GM12878 (cell line): ENCODE measurements at regions of chr2 and their contacts with region 1.

Region 1: GRCh38 chr2:69741619-69742466 is at the start of gene ANXA4:
- DNase-seq: no peak
- ATAC-seq: peak; percentile 91
- H3K4me3 ChIP-seq: peak within 1 kb of the TSS; percentile 71
- H3K27ac ChIP-seq: peak within 1 kb of the TSS; percentile 95
- H3K4me1 ChIP-seq: peaks cover 6% of the 10 kb centered on the region
- H3K27me3 ChIP-seq: no peaks in the 10 kb centered on the region
- CTCF ChIP-seq: no peak
- EP300 ChIP-seq: peak in 1 of 2 experiments; percentile 34; a peak in 1 of 4 replicates
- POLR2A ChIP-seq: peak; percentile 89
- RAD21 ChIP-seq: no peak
- polyA plus RNA-seq, gene ANXA4: 64.6 to 73.1 TPM

Region 2: DNA sequence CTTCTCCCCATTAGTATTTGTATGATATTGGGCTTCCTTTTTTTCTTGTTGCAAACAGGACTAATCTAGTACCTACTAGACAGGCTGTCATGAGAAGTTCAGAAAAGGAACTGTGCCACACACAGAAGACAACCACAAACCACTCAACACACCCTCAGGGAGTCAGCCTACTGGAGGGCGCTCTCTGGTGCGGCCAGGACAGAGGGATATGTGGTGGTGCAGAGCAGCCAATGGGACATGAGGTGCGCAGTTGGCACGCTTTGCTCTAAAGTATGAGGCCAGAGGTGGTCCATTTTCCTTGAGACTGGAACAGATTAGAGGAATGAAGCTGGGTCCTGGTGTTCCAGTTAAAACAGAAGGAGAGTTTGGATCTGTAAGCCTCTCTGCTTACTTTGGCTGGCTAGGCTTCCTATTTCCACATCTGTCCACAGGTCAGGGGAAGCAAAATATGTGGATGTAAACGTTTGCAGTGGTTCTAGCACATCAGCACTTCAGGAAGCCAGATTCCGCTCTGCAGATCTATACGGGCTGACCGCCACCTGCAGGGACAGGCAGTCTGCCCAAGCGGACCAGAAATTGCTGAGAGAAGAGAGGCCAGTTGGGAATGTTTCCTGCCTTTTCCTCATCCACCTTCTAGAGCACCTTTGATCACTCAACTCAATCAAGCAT is 468.9 kb before region 1 on chr2:
- CTCF ChIA-PET with region 1: no interaction called
- POLR2A ChIA-PET with region 1: no interaction called
- RAD21 ChIA-PET with region 1: no interaction called
- SMC1A ChIA-PET with region 1: no interaction called
- in situ Hi-C with region 1: no loop called
- intact Hi-C with region 1: no loop called
- DNase-seq: no peak
- ATAC-seq: 0 out of 3 replicates have a peak, but pooled peaks have one; percentile 18
- H3K4me3 ChIP-seq: no peak overlapping the region
- H3K27ac ChIP-seq: no peak overlapping the region
- H3K4me1 ChIP-seq: no peaks in the 10 kb centered on the region
- H3K27me3 ChIP-seq: 0 out of 4 replicates have a peak, but pooled peaks cover 0 to 2% of the 10 kb centered on the region in 2 experiments
- CTCF ChIP-seq: no peak
- EP300 ChIP-seq: no peak
- POLR2A ChIP-seq: no peak
- RAD21 ChIP-seq: no peak

Region 3: GRCh38 chr2:69704446-69704845 is 37.4 kb before region 1 on chr2:
- CTCF ChIA-PET with region 1: no interaction called
- POLR2A ChIA-PET with region 1: no interaction called
- RAD21 ChIA-PET with region 1: no interaction called
- SMC1A ChIA-PET with region 1: no interaction called
- in situ Hi-C with region 1: no loop called
- intact Hi-C with region 1: no loop called
- DNase-seq: no peak
- ATAC-seq: no peak
- H3K4me3 ChIP-seq: no peak overlapping the region
- H3K27ac ChIP-seq: no peak overlapping the region
- H3K4me1 ChIP-seq: no peaks in the 10 kb centered on the region; the same call in 1 of the 2 replicates
- H3K27me3 ChIP-seq: no peaks in the 10 kb centered on the region
- CTCF ChIP-seq: no peak
- EP300 ChIP-seq: no peak
- POLR2A ChIP-seq: no peak
- RAD21 ChIP-seq: no peak

Region 4: DNA sequence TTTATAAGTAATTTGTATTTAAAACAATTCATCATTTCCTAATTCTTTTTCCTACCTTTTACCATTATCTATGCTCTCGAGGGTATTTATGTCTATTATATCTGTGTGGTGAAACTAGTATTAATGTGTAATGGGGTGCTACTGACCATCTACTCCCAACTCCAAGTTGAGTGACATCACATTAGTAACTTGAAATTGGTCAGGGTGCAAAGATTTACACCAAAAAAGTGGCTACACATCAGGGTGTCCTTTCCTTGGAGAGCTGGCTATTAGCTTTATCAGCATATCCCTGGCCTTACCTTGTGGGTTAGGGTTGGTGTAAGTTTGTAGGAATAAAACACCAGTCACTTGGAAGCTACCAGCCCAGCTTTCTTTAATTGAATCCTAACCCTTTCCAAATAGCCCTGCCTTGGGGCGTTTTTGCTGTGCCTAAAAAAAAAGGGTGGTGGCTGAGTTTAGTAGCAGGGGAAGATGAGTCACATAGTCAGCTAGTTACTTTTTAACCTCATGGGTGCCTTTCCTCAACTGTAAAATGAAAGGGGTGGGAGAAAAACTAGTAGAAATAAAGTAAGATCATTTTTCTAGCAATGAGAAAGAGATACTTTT is 14.1 kb after region 1 on chr2:
- CTCF ChIA-PET with region 1: interaction called, 17 read pairs
- POLR2A ChIA-PET with region 1: interaction called, 61 read pairs
- RAD21 ChIA-PET with region 1: interaction called, 76 read pairs
- SMC1A ChIA-PET with region 1: interaction called, 164 read pairs
- in situ Hi-C with region 1: no loop called
- intact Hi-C with region 1: no loop called
- DNase-seq: no peak
- ATAC-seq: peak; percentile 90
- H3K4me3 ChIP-seq: no peak overlapping the region
- H3K27ac ChIP-seq: no peak overlapping the region
- H3K4me1 ChIP-seq: peaks cover 7% of the 10 kb centered on the region
- H3K27me3 ChIP-seq: no peaks in the 10 kb centered on the region
- CTCF ChIP-seq: no peak
- EP300 ChIP-seq: no peak
- POLR2A ChIP-seq: no peak
- RAD21 ChIP-seq: no peak

Region 5: GRCh38 chr2:69770193-69771146 is 28.6 kb after region 1 on chr2:
- CTCF ChIA-PET with region 1: interaction called, 10 read pairs
- POLR2A ChIA-PET with region 1: interaction called, 12 read pairs
- RAD21 ChIA-PET with region 1: interaction called, 12 read pairs
- SMC1A ChIA-PET with region 1: interaction called, 22 read pairs
- in situ Hi-C with region 1: no loop called
- intact Hi-C with region 1: no loop called
- DNase-seq: no peak
- ATAC-seq: peak; percentile 62
- H3K4me3 ChIP-seq: no peak overlapping the region
- H3K27ac ChIP-seq: no peak overlapping the region
- H3K4me1 ChIP-seq: peaks cover 60% of the 10 kb centered on the region
- H3K27me3 ChIP-seq: no peaks in the 10 kb centered on the region
- CTCF ChIP-seq: no peak
- EP300 ChIP-seq: no peak
- POLR2A ChIP-seq: no peak
- RAD21 ChIP-seq: no peak

Region 6: DNA sequence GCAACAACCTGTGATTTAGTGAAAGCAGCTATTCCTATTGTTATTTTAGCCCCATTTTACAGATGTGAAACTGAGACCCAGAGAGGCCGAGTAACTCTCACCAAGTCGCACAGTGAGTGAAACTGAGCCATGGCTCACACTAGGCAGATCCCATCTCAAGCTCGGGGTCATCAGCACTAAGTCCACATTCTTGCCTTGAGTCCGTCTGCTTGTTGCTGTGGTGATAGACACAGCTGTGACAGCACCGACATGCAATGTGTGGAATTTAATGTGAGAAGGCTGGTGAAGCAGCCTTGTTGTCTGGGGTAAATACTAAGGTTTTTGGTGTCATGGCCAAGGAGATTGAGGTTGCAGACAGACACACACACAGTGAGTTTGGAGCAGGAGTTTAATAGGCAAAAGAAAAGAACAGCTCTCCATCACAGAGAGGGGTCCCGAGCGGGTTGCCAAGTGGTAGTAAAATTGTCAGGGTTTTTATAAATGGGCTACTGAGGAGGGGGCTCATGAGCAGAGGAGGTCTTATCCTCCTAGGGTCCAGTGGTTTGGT is 47.4 kb after region 1 on chr2:
- CTCF ChIA-PET with region 1: interaction called, 6 read pairs
- POLR2A ChIA-PET with region 1: interaction called, 26 read pairs
- RAD21 ChIA-PET with region 1: interaction called, 39 read pairs
- SMC1A ChIA-PET with region 1: interaction called, 34 read pairs
- in situ Hi-C with region 1: no loop called
- intact Hi-C with region 1: no loop called
- DNase-seq: no peak
- ATAC-seq: peak; percentile 92
- H3K4me3 ChIP-seq: peak overlapping the region; percentile 54
- H3K27ac ChIP-seq: peak overlapping the region; percentile 92
- H3K4me1 ChIP-seq: peaks cover 32% of the 10 kb centered on the region
- H3K27me3 ChIP-seq: no peaks in the 10 kb centered on the region
- CTCF ChIP-seq: no peak
- EP300 ChIP-seq: peak in 1 of 2 experiments; percentile 42; a peak in 1 of 4 replicates
- POLR2A ChIP-seq: peak; percentile 61; the same call in 1 of the 2 replicates
- RAD21 ChIP-seq: no peak

Region 7: GRCh38 chr2:69804416-69804815 is 62.6 kb after region 1 on chr2:
- CTCF ChIA-PET with region 1: interaction called, 12 read pairs
- POLR2A ChIA-PET with region 1: interaction called, 14 read pairs
- RAD21 ChIA-PET with region 1: interaction called, 17 read pairs
- SMC1A ChIA-PET with region 1: interaction called, 70 read pairs
- in situ Hi-C with region 1: loop called (anchors 5 kb)
- intact Hi-C with region 1: loop called (anchors 5 kb)
- DNase-seq: no peak
- ATAC-seq: no peak
- H3K4me3 ChIP-seq: no peak overlapping the region
- H3K27ac ChIP-seq: peak overlapping the region; percentile 0; the same call in 1 of the 2 replicates
- H3K4me1 ChIP-seq: peaks cover 47% of the 10 kb centered on the region
- H3K27me3 ChIP-seq: no peaks in the 10 kb centered on the region
- CTCF ChIP-seq: no peak
- EP300 ChIP-seq: no peak
- POLR2A ChIP-seq: no peak
- RAD21 ChIP-seq: no peak

Region 8: GRCh38 chr2:70310899-70311298 is 569.1 kb after region 1 on chr2:
- CTCF ChIA-PET with region 1: no interaction called
- POLR2A ChIA-PET with region 1: no interaction called
- RAD21 ChIA-PET with region 1: no interaction called
- SMC1A ChIA-PET with region 1: no interaction called
- in situ Hi-C with region 1: no loop called
- intact Hi-C with region 1: no loop called
- DNase-seq: no peak
- ATAC-seq: no peak
- H3K4me3 ChIP-seq: no peak overlapping the region
- H3K27ac ChIP-seq: no peak overlapping the region
- H3K4me1 ChIP-seq: no peaks in the 10 kb centered on the region
- H3K27me3 ChIP-seq: no peaks in the 10 kb centered on the region
- CTCF ChIP-seq: no peak
- EP300 ChIP-seq: no peak
- POLR2A ChIP-seq: no peak
- RAD21 ChIP-seq: no peak